Left cardiac atrium (tissue), 4 donors: ENCODE measurements at regions of chr3 and their contacts with region 1.

Region 1: GRCh38 chr3:146817704-146818103 is 212.6 kb upstream of the PLSCR5 start:
- DNase-seq: no peak
- ATAC-seq: no peak

Region 2: DNA sequence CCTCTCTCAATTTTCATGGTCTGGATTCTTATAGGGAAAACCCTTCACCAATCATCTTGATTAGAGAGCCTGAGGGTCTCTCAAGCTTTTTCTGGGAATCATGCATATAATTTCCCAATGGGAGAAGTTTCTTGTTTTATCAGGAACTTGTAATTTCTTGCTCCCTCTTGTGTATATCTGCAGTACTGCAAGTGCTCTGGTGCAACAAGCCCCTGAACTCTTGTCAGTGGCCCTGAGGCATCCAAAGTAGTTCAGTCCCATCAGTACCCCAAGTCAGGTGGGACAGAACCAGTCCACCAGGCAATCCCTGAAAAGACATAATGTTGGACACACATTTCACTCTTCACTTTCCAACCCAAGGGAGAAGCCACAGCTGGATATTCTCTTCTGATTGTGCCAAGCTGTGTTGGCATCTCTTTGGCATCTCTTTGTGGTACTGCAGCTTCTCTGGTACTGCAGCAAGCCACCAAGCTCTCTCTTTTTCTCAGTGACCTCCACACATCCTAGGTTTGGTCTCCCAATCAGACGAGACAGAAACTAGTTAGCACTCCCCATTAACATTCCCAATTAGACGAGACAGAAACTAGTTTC is 374.2 kb after region 1 on chr3:
- intact Hi-C with region 1: loop called (anchors 2 to 10 kb)
- DNase-seq: no peak
- ATAC-seq: no peak